ENCODE measurements at regions of chr11 and their contacts with region 1.

Region 1: GRCh38 chr11:76670485-76671236 is at the start of gene LRRC32:
- DNase-seq: peak; percentile 89
- H3K4me3 ChIP-seq: peak within 1 kb of the TSS; percentile 22 to 76 (median 56)
- H3K27ac ChIP-seq: peak within 1 kb of the TSS; percentile 5 to 84 (median 80)
- H3K4me1 ChIP-seq: peaks cover 41 to 94% (median 76%) of the 10 kb centered on the region in 6 donors
- H3K27me3 ChIP-seq: peaks cover 0 to 56% (median 15%) of the 10 kb centered on the region in 7 donors
- CTCF ChIP-seq: peak in 1 of 11 experiments; percentile 5
- POLR2A ChIP-seq: no peak
- total RNA-seq, gene LRRC32: 44.1 to 214 (median 90.3) TPM

Region 2: DNA sequence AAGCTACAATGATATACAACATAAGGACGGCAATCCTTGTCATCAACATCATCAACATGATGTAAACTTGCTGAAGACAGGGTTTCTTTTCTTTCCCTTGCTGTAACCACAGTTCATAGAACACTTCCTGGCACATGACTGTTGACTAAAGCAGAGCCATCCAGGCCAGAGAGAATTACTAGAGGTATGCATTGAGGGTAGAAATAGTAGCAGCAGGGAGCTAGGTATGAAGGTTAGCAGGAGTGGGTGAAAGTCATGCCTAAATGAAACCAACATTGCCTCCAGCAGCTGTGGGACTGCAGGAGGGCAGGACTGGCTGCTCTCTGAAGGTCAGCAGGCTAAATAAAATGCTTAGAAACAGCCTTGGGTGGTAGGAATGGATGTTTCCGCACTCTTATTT is 103.8 kb before region 1 on chr11:
- intact Hi-C with region 1: no loop called
- DNase-seq: no peak
- H3K4me3 ChIP-seq: no peak overlapping the region
- H3K27ac ChIP-seq: no peak overlapping the region
- H3K4me1 ChIP-seq: peaks cover 0 to 13% (median 3%) of the 10 kb centered on the region in 6 donors
- H3K27me3 ChIP-seq: no peaks in the 10 kb centered on the region
- CTCF ChIP-seq: no peak
- POLR2A ChIP-seq: no peak

Region 3: DNA sequence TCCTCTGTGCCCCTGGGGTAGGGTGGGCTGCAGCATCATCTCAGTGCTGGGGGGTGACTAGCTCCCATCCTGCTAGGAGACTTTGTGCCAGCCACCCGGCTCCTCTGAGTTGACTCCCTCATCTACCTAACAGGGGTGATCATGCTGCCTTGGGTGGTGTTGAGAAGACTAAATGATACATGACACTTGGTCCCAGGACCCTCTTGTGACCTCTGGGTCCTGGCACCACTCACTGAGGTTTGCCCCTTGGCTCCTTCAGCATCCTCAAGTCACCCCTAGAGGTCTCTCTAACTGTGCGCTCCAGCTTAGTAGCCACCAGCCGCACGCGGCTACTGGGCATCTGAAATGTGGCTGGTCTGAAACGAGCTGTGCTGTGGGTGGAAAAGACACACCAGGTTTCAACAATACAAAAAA is 72.2 kb before region 1 on chr11:
- intact Hi-C with region 1: loop called (anchors 5 kb)
- DNase-seq: no peak
- H3K4me3 ChIP-seq: no peak overlapping the region
- H3K27ac ChIP-seq: no peak overlapping the region
- H3K4me1 ChIP-seq: peaks cover 0 to 50% (median 23%) of the 10 kb centered on the region in 6 donors
- H3K27me3 ChIP-seq: peaks cover 0 to 4% (median 0%) of the 10 kb centered on the region in 7 donors
- CTCF ChIP-seq: peak in 9 of 11 experiments; percentile 16 to 66 (median 50)
- POLR2A ChIP-seq: no peak

Region 4: GRCh38 chr11:76872959-76873827 is 202.5 kb after region 1 on chr11:
- intact Hi-C with region 1: no loop called
- DNase-seq: no peak
- H3K4me3 ChIP-seq: no peak overlapping the region
- H3K27ac ChIP-seq: no peak overlapping the region
- H3K4me1 ChIP-seq: peaks cover 0 to 12% (median 2%) of the 10 kb centered on the region in 6 donors
- H3K27me3 ChIP-seq: no peaks in the 10 kb centered on the region
- CTCF ChIP-seq: no peak
- POLR2A ChIP-seq: no peak

Measured in spleen (tissue), 13 donors.